ENCODE measurements at regions of chr12 and their contacts with region 1.

Region 1: GRCh38 chr12:56315622-56316473 is at the start of gene CNPY2:
- DNase-seq: peak; percentile 97
- H3K4me3 Mint-ChIP-seq: peak within 1 kb of the TSS; percentile 97
- H3K27ac Mint-ChIP-seq: peak within 1 kb of the TSS; percentile 98
- H3K4me1 Mint-ChIP-seq: peaks cover 7% of the 10 kb centered on the region
- H3K27me3 Mint-ChIP-seq: no peaks in the 10 kb centered on the region
- total RNA-seq, gene CNPY2: 165 and 169 TPM in 2 replicates

Region 2: DNA sequence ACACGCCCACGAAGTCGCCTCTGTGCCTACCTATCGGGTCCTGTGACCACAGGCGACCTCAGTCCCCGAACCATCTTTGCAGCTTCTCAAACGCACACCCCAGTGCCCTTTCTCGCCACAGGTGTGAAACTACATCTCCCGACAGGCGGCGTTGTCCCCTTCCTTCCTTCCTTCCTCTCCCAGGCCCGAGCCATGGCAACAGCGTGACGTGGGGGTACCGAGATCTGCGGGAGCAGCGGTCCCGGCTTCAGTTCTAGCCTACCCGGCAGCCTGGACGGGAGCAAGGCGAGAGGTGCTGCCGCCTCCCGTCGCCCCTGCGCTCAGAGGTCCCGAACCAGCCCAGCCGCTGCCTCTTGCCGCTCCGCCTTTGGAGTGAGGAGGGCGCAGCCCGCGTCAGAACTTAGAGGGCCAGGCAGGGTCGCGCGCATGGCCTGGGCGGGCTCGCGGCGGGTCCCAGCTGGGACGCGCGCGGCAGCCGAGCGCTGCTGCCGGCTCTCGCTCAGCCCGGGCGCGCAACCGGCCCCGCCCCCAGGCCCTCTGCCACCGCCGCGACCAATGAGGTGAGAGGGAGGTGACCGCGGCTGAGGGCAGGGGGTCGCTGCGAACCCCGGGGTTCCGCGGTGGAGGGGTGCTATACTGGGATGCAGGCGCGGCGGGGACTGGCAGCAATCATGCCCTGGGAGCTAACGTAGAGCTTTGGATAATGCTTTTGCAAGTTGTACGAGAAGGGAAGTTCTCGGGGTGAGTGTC is 49.0 kb before region 1 on chr12 and contains the start of gene COQ10A:
- intact Hi-C with region 1: loop called (anchors 5 kb)
- DNase-seq: peak; percentile 96
- H3K4me3 Mint-ChIP-seq: peak within 1 kb of the TSS; percentile 93
- H3K27ac Mint-ChIP-seq: peak within 1 kb of the TSS; percentile 94
- H3K4me1 Mint-ChIP-seq: peaks cover 14% of the 10 kb centered on the region
- H3K27me3 Mint-ChIP-seq: no peaks in the 10 kb centered on the region
- total RNA-seq, gene COQ10A: 17.0 TPM in 2 replicates

Region 3: GRCh38 chr12:56333679-56334489 is 18.0 kb after region 1 on chr12 and contains the start of gene PAN2:
- intact Hi-C with region 1: loop called (anchors 1 kb)
- DNase-seq: peak; percentile 98
- H3K4me3 Mint-ChIP-seq: peak within 1 kb of the TSS; percentile 88
- H3K27ac Mint-ChIP-seq: peak within 1 kb of the TSS; percentile 99
- H3K4me1 Mint-ChIP-seq: peaks cover 42% of the 10 kb centered on the region
- H3K27me3 Mint-ChIP-seq: no peaks in the 10 kb centered on the region
- total RNA-seq, gene PAN2: 31.3 and 34.7 TPM in 2 replicates

Region 4: DNA sequence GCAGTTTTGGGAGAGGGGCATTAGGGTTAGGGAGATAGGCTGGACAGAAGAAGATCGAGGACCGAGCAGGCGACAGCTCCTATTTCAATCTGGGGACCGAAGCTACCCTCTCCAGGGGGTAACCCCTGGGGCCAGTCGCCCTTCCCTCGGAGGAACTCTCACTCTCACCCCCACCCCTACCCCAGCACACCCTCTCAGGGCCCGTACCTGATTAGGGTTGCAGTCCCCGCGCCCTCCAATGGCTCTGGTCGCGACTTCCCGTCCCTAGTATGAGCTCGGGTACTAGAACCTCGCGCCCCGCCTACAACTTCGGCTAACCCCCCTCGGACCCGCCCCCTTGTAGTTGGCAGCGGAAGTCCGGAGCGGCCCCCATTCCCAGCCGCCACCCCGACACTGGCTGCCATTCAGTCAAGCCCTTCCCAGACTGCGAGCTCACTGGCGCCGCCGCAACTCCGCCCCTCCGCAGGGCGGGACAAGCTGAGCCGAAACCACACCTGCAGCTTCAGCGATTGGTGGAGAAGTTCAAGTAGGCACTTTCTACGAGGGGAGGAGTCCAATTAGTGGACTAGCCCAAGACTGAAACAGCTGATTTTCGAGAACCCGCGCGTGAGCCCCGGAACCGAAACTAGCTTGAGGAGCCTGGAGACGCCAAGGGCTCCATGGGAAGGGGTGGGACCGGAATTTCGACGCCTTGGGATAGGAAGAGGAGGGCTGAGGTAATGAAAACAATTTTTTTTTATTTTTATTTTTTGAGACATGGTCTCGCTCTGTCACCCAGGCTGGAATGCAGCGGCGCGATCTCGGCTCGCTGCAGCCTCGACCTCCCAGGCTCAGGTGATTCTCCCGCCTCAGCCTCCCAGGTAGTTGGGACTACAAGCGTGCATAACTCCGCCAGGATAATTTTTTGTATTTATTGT is 44.3 kb after region 1 on chr12 and contains the start of gene STAT2:
- intact Hi-C with region 1: loop called (anchors 1 kb)
- DNase-seq: peak; percentile 100
- H3K4me3 Mint-ChIP-seq: peak within 1 kb of the TSS; percentile 94
- H3K27ac Mint-ChIP-seq: peak within 1 kb of the TSS; percentile 95
- H3K4me1 Mint-ChIP-seq: peaks cover 31% of the 10 kb centered on the region
- H3K27me3 Mint-ChIP-seq: no peaks in the 10 kb centered on the region
- total RNA-seq, gene STAT2: 64.9 and 68.4 TPM in 2 replicates

Region 5: GRCh38 chr12:56413392-56413791 is 97.5 kb after region 1 on chr12:
- intact Hi-C with region 1: no loop called
- DNase-seq: no peak
- H3K4me3 Mint-ChIP-seq: no peak overlapping the region
- H3K27ac Mint-ChIP-seq: no peak overlapping the region
- H3K4me1 Mint-ChIP-seq: no peaks in the 10 kb centered on the region
- H3K27me3 Mint-ChIP-seq: no peaks in the 10 kb centered on the region

Region 6: GRCh38 chr12:56670836-56671235 is 355.0 kb after region 1 on chr12:
- intact Hi-C with region 1: no loop called
- DNase-seq: no peak
- H3K4me3 Mint-ChIP-seq: no peak overlapping the region
- H3K27ac Mint-ChIP-seq: no peak overlapping the region
- H3K4me1 Mint-ChIP-seq: peaks cover 30% of the 10 kb centered on the region
- H3K27me3 Mint-ChIP-seq: no peaks in the 10 kb centered on the region